CD4-positive, alpha-beta T cell (primary cell): ENCODE measurements at regions of chr18 and their contacts with region 1.

Region 1: DNA sequence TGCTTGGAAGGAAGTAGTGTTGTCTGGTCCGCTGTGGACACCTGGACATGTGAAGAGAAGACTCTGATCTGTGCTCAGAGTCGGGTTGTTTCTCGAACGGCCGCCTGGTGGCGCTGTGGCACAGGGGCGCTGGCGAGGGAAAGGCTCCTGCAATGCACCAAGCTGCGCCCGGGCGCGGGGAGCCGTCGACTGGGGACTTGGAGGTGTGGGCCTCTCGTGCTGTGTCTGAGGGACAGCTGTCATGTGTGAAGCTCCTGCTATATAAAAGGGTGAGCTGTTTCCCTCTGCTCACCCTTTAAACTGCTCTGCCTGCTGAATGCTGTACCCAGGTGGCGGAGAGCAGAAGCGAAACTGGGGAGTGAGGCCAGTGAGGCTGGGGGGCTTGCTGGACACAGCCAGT is 44.0 kb downstream of the GNAL start:
- DNase-seq: peak; percentile 33 to 78 (median 58)
- ATAC-seq: peak; percentile 56
- H3K4me3 ChIP-seq: no peak overlapping the region
- H3K4me3 Mint-ChIP-seq: no peak overlapping the region
- H3K27ac ChIP-seq: no peak overlapping the region
- H3K27ac Mint-ChIP-seq: no peak overlapping the region
- H3K4me1 ChIP-seq: peaks cover 4% of the 10 kb centered on the region
- H3K4me1 Mint-ChIP-seq: no peaks in the 10 kb centered on the region
- H3K27me3 ChIP-seq: peaks cover 8 to 11% of the 10 kb centered on the region in 2 experiments
- H3K27me3 Mint-ChIP-seq: peaks cover 54% of the 10 kb centered on the region
- CTCF ChIP-seq: peak; percentile 85

Region 2: DNA sequence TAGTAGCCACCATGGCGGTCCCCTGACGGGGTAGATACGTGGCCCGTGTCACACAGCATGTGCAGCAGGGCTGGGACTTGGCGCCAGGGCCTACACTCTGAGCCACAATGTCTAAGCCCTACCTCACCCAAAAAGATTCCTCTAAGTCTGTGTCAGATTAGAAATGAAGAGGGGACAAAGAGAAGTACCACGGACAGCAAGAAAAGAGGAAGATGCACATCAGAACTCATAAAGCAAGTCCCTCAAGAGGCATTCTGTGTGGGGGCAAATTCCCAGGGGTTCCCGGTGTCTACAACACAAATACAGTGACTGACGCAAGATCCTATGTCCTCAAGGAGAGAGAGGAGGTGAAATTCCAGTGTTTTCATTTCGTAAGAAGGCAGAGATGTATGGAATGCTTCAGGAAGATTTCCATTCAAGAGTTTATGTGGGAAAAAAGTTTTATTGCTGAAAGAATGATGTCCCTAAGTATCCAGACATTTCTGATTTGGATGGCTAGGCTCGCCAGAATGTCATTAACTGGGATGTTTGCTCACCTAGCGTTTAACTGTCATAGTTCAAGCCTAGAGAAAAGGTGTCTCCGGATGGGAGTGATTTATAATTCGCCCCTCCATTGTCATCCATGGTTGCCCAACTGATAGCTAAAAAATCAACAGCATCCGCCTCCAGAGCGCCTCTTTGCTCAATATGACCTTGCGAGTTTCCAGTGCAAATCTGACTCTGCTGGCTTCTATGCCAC is 42.6 kb after region 1 on chr18:
- CTCF ChIA-PET with region 1: no interaction called
- POLR2A ChIA-PET with region 1: no interaction called
- intact Hi-C with region 1: no loop called
- DNase-seq: no peak
- ATAC-seq: no peak
- H3K4me3 ChIP-seq: no peak overlapping the region
- H3K4me3 Mint-ChIP-seq: no peak overlapping the region
- H3K27ac ChIP-seq: no peak overlapping the region
- H3K27ac Mint-ChIP-seq: no peak overlapping the region
- H3K4me1 ChIP-seq: no peaks in the 10 kb centered on the region
- H3K4me1 Mint-ChIP-seq: no peaks in the 10 kb centered on the region
- H3K27me3 ChIP-seq: peaks cover 0 to 4% of the 10 kb centered on the region in 2 experiments
- H3K27me3 Mint-ChIP-seq: peaks cover 27% of the 10 kb centered on the region
- CTCF ChIP-seq: no peak

Region 3: GRCh38 chr18:11818486-11819203 is 85.6 kb after region 1 on chr18:
- CTCF ChIA-PET with region 1: no interaction called
- POLR2A ChIA-PET with region 1: no interaction called
- intact Hi-C with region 1: no loop called
- DNase-seq: peak in 2 of 14 experiments; percentile 19 to 51
- ATAC-seq: no peak
- H3K4me3 ChIP-seq: no peak overlapping the region
- H3K4me3 Mint-ChIP-seq: no peak overlapping the region
- H3K27ac ChIP-seq: no peak overlapping the region
- H3K27ac Mint-ChIP-seq: no peak overlapping the region
- H3K4me1 ChIP-seq: no peaks in the 10 kb centered on the region
- H3K4me1 Mint-ChIP-seq: no peaks in the 10 kb centered on the region
- H3K27me3 ChIP-seq: no peaks in the 10 kb centered on the region
- H3K27me3 Mint-ChIP-seq: no peaks in the 10 kb centered on the region
- CTCF ChIP-seq: no peak

Region 4: GRCh38 chr18:11872479-11873136 is 139.6 kb after region 1 on chr18:
- CTCF ChIA-PET with region 1: interaction called, 8 read pairs
- POLR2A ChIA-PET with region 1: no interaction called
- intact Hi-C with region 1: loop called (anchors 2 kb)
- DNase-seq: peak in 5 of 14 experiments; percentile 7 to 55 (median 28)
- ATAC-seq: peak; percentile 41
- H3K4me3 ChIP-seq: no peak overlapping the region
- H3K4me3 Mint-ChIP-seq: no peak overlapping the region
- H3K27ac ChIP-seq: no peak overlapping the region
- H3K27ac Mint-ChIP-seq: no peak overlapping the region
- H3K4me1 ChIP-seq: no peaks in the 10 kb centered on the region
- H3K4me1 Mint-ChIP-seq: no peaks in the 10 kb centered on the region
- H3K27me3 ChIP-seq: no peaks in the 10 kb centered on the region
- H3K27me3 Mint-ChIP-seq: peaks cover 4% of the 10 kb centered on the region
- CTCF ChIP-seq: peak; percentile 45

Region 5: DNA sequence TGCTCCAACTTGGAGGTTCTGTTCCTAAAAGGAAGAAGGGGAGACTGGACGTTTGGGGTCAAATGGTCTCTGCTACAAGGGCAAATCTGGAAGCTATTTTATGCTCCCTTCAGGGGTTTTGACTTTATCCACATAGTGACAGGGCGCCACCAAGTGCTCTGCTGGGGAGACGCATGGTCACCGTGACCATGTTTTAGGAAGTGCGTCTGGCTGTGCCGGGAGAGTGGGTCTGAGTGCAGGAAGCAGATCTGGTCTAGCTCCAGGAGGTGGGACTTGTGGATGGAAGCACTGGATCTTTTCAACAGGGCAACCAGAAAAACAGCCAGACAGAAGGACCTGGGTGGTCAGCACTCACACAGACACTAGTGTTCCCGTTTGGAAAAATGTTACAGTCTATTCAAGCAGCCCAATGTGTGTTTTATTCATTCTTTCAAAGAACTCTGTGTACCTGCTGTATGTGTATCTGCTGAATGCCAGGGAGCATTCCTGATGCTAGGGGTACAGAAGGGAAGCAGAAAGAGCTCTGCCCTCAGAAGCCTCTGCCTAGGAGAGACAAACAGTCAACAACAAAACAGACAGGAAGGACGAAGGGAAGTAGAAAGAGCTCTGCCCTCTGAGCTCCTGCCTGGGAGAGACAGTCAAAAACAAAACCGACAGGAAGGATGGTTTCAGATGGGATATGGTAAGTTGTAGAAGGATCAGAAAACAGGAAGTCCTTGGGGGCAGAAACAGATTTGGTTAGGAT is 262.6 kb after region 1 on chr18:
- CTCF ChIA-PET with region 1: interaction called, 13 read pairs
- POLR2A ChIA-PET with region 1: no interaction called
- intact Hi-C with region 1: loop called (anchors 1 to 2 kb)
- DNase-seq: peak; percentile 32 to 79 (median 50)
- ATAC-seq: peak; percentile 83
- H3K4me3 ChIP-seq: no peak overlapping the region
- H3K4me3 Mint-ChIP-seq: peak overlapping the region; percentile 53
- H3K27ac ChIP-seq: no peak overlapping the region
- H3K27ac Mint-ChIP-seq: no peak overlapping the region
- H3K4me1 ChIP-seq: peaks cover 11% of the 10 kb centered on the region
- H3K4me1 Mint-ChIP-seq: peaks cover 10% of the 10 kb centered on the region
- H3K27me3 ChIP-seq: no peaks in the 10 kb centered on the region
- H3K27me3 Mint-ChIP-seq: no peaks in the 10 kb centered on the region
- CTCF ChIP-seq: peak; percentile 72

Region 6: DNA sequence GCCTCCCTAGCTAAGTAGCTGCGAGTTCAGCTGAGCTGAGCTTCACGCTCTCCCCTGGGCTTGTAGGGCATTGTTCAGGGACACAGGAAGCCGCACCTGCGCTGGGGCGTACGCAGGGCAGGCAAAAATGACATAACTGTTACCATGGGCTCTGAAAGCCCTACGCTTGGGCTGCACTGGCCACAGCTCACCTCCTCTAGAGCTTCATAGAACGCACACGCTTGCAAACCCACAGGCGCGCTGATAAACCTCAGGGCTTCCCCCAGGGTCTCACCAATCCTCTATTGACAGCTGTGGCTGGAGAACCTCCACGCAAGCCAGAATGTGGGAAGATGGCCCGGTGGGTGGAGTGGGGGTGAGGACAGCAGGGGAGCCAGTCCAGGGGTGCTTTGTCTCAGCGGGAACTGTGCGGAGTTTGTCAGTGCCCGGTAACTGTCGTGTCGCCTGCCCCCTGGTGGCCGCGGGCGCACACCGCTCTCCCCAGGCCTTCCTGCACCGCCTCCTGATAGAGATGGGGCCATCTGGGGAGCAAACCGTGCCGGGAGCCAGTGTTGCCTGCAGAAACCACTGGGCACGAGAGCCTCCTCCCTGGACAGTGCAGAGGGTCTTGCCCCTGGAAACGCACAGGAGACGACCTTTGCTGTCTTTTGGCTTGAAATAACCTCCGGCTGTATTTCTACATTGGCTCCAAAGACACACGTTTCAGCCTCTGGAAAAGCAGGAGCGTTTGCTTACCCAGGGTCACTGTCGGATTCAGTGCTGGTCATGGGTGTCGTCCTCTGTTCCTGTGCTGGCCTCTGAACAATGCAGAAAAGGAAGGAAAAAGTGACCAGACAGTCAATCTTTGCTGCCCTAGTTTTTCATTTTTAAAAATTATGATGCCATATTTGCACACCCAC is 504.2 kb after region 1 on chr18:
- CTCF ChIA-PET with region 1: no interaction called
- POLR2A ChIA-PET with region 1: no interaction called
- intact Hi-C with region 1: loop called in 1 of 2 experiments (anchors 5 kb)
- DNase-seq: peak; percentile 13 to 68 (median 44)
- ATAC-seq: peak; percentile 81
- H3K4me3 ChIP-seq: no peak overlapping the region
- H3K4me3 Mint-ChIP-seq: no peak overlapping the region
- H3K27ac ChIP-seq: no peak overlapping the region
- H3K27ac Mint-ChIP-seq: no peak overlapping the region
- H3K4me1 ChIP-seq: peaks cover 3% of the 10 kb centered on the region
- H3K4me1 Mint-ChIP-seq: no peaks in the 10 kb centered on the region
- H3K27me3 ChIP-seq: peaks cover 0 to 5% of the 10 kb centered on the region in 2 experiments
- H3K27me3 Mint-ChIP-seq: peaks cover 41% of the 10 kb centered on the region
- CTCF ChIP-seq: peak; percentile 76